Activated CD4-positive, alpha-beta T cell treated with anti-CD3 and anti-CD28 coated beads, Interleukin-2, amount 10 ng/mL, durations not matched to agents 24 days and 14 days (primary cell): ENCODE measurements at regions of chr3 and their contacts with region 1.

Region 1: DNA sequence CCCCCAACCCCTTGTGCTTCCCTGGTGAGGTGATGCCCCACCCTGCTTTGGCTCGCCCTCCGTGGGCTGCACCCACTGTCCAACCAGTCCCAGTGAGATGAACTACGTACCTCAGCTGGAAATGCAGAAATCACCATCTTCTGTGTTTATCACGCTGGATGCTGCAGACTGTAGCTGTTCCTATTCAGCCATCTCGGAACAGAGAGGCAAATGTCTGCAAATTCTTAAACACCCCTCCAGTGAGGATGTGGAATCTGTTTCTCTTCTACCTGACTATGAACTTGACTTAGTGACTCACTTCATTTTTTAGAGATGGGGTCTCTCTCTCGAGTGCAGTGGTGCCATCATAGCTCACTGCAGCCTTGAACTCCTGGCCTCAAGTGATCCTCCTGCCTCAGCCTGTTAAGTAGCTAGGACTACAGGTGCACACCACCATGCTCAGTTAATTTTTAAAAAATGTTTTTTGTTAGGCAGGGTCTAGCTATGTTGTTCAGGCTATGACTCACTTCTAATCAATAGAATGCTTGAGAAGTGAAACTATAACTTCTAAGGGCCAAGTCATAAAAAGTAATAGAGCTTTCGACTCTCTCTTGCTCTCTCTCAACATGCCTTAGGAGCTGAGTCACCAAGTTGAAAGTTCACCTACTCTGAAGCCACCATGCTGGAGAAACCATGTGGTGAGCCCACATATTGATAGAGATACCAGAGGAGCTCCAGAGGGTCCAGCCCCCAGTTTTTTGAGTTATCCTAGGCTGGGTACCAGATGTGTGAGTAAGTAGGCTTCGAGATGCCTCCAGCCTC is 11.5 kb upstream of the PARP14 start:
- DNase-seq: peak; percentile 78
- H3K4me3 Mint-ChIP-seq: peak overlapping the region; percentile 49
- H3K27ac Mint-ChIP-seq: peak overlapping the region; percentile 85
- H3K4me1 Mint-ChIP-seq: peaks cover 17% of the 10 kb centered on the region
- H3K27me3 Mint-ChIP-seq: no peaks in the 10 kb centered on the region

Region 2: DNA sequence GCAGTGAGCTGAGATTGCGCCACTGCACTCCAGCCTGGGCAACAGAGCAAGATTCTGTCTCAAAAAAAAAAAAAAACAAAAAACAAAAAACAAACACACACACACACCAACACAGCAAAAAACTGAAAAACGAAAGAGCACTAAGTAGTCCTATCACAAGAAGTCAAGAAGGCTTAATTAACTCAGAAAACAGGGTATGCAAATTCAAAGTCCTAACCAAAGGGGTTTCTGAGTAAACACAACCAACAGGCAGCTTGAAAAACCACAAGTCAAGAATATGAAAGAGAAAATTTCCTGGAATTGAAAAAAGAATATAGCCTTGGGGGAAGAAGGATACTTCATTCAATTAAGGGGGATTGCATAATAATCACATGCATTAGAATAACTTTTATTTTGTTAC is 26.2 kb before region 1 on chr3:
- intact Hi-C with region 1: loop called (anchors 1 kb)
- DNase-seq: peak; percentile 59
- H3K4me3 Mint-ChIP-seq: peak overlapping the region; percentile 68
- H3K27ac Mint-ChIP-seq: peak overlapping the region; percentile 73
- H3K4me1 Mint-ChIP-seq: peaks cover 36% of the 10 kb centered on the region
- H3K27me3 Mint-ChIP-seq: no peaks in the 10 kb centered on the region